ENCODE measurements at regions of chr19 and their contacts with region 1.

Region 1: GRCh38 chr19:13952154-13953035 is at the start of gene DCAF15:
- DNase-seq: peak; percentile 100
- total RNA-seq, gene DCAF15: 18.8 to 21.0 TPM

Region 2: DNA sequence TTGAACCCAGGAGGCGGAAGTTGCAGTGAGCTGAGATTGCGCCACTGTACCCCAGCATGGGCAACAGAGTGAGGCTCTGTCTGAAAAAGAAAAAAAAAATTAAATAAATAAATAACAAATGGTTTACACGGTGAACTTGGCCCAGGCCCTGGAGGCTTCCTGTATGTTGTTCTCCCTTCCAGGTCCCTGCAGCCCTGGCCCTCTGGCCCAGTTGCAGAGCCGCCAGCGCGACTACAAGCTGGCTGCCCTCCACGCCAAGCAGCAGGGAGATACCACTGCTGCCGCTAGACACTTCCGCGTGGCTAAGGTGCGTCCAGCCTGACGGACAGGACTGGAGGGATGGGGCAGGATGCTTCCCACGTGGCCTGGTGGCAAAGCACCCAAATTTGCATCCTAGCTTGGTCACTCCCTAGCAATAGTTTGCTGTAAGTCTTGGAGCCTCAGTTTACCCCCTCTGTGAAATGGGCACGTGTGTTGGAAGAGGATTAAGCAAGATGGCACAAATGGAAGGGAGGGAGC is 34.4 kb before region 1 on chr19:
- intact Hi-C with region 1: loop called in 1 of 2 experiments (anchors 1 kb)
- DNase-seq: no peak

Region 3: DNA sequence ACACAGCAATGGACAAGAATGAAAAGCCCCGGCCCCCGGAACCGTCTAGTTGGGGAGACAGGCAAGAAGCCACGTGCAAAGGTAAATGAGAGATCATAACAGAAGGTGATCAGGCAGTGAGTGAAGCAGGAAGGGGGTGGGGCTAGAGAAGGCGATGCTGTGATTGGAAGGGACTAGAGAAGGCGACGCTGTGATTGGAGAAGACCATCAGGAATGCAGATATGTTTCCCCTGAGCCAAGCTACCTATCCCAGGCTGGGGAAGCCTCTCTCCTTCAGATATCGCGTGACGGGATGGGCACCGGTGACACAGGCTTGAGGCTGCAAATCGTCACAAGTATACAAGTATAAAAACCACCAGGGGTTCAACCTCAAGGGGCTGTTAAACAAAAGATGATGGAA is 21.7 kb after region 1 on chr19:
- intact Hi-C with region 1: loop called in 1 of 2 experiments (anchors 1 kb)
- DNase-seq: no peak

Region 4: DNA sequence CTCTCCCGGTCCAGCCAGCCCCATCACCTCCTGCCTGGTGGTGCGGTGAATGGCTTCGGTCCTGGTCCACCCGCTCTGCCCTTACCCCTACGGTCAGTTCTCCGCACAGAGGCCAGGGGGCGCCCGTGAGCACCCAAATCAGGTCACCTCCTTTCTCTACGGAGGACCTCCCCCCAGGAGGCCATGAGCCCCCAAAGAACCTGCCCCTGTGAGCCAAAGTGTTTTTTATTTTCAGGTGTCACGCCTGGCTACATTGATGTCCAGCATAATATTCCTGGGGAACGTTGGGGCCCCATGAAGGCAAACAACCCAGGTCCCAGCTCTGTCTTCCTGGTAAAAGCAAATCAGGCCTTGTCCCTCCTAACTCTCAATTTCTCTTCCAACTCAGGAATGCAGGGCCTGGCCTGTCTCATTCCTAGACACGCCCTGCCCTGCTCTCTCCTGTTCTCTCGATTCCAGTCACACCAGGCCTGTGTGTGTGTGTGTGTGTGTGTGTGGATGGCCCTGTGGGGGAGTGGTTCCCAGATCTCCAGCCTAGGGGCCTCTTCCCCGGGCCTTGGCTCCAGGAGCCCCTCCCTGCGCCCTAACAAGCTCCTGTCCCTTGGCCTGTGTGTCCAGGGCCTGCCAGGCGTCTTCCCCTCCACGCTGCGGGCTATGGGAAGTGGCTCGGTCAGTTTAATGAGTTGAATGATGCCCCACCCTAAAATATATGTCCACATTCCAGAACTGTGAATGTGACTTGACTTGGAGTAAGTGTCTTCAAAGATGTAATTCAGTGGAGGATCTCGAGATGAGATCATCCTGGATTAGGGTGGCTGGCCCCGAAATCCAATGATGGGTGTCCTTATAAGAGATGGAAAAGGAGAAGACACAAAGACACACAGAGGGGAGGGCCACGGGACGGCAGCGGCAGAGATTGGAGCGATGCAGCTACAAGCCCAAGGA is 553.4 kb after region 1 on chr19:
- intact Hi-C with region 1: no loop called
- DNase-seq: no peak

Measured in posterior vena cava (tissue), 2 donors.